ENCODE measurements at regions of chr14 and their contacts with region 1.

Region 1: DNA sequence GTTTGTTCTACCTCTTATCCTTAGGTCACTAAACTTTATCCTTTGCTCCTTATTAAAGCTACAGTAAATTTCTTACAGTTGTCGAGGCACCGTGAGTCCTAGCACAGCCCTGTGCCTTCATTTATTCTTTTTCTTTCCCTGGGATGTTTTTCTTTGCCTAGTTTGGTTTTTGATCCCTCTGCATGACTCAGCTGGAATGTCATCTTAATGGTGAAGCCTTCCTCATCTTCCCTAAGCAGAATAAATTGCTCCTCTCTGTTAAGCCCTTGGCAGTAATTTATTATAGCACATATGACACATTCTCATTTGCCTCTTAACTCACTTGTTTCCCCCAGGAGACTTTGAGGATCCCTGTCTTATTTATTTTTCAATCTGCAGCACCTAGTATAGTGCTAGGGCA is 16.6 kb downstream of the ACTR10 start:
- DNase-seq: peak; percentile 32
- ATAC-seq: peak; percentile 74
- H3K4me3 ChIP-seq: no peak overlapping the region
- H3K27ac ChIP-seq: no peak overlapping the region
- H3K4me1 ChIP-seq: peaks cover 3% of the 10 kb centered on the region; the same call in 1 of the 2 replicates
- H3K27me3 ChIP-seq: no peaks in the 10 kb centered on the region
- CTCF ChIP-seq: no peak
- POLR2A ChIP-seq: no peak
- RAD21 ChIP-seq: no peak

Region 2: GRCh38 chr14:58540749-58541632 is 324.4 kb after region 1 on chr14:
- CTCF ChIA-PET with region 1: no interaction called
- POLR2A ChIA-PET with region 1: no interaction called
- dilution Hi-C with region 1: no loop called
- in situ Hi-C with region 1: no loop called
- intact Hi-C with region 1: no loop called
- DNase-seq: peak; percentile 64
- ATAC-seq: peak; percentile 82
- H3K4me3 ChIP-seq: no peak overlapping the region
- H3K27ac ChIP-seq: no peak overlapping the region
- H3K4me1 ChIP-seq: peaks cover 5% of the 10 kb centered on the region; the same call in 1 of the 2 replicates
- H3K27me3 ChIP-seq: no peaks in the 10 kb centered on the region
- CTCF ChIP-seq: no peak
- POLR2A ChIP-seq: no peak
- RAD21 ChIP-seq: no peak

Region 3: GRCh38 chr14:59490756-59491155 is 1274.2 kb after region 1 on chr14:
- CTCF ChIA-PET with region 1: no interaction called
- POLR2A ChIA-PET with region 1: no interaction called
- dilution Hi-C with region 1: no loop called
- in situ Hi-C with region 1: no loop called
- intact Hi-C with region 1: loop called (anchors 10 kb)
- DNase-seq: no peak
- ATAC-seq: no peak
- H3K4me3 ChIP-seq: no peak overlapping the region
- H3K27ac ChIP-seq: no peak overlapping the region
- H3K4me1 ChIP-seq: no peaks in the 10 kb centered on the region
- H3K27me3 ChIP-seq: no peaks in the 10 kb centered on the region
- CTCF ChIP-seq: no peak
- POLR2A ChIP-seq: no peak
- RAD21 ChIP-seq: no peak